Lower leg skin (tissue), 4 donors: ENCODE measurements at regions of chr1 and their contacts with region 1.

Region 1: DNA sequence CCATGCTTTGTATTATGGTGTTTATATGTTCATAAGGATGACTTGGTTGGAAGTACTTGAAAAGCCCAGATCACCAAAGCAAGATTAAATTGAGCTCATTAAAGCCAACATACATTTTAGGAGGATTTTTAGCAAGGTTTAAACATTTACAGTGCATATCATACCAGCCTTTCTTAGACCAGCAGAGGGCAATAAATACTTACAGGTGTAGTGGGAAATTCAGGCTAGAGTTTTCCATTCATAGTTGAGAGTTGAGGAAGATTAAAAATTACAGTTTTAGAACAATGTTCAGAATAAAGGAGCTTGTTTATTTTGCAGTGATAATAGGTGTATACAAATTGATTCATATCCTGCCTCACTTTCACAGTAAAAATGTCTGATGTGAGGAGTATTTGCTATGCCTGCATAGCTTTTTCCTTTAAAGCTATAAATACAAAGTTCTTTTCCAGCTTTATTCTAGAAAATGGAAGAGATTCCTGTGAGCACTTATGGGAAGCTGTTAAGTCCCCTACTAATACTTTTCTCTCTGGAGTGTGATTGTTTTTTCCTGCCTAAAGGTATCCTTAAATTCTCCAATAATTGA is 35.3 kb downstream of the DTL start:
- DNase-seq: no peak
- H3K4me3 ChIP-seq: no peak overlapping the region
- CTCF ChIP-seq: peak in 1 of 3 donors; percentile 64
- POLR2A ChIP-seq: no peak

Region 2: DNA sequence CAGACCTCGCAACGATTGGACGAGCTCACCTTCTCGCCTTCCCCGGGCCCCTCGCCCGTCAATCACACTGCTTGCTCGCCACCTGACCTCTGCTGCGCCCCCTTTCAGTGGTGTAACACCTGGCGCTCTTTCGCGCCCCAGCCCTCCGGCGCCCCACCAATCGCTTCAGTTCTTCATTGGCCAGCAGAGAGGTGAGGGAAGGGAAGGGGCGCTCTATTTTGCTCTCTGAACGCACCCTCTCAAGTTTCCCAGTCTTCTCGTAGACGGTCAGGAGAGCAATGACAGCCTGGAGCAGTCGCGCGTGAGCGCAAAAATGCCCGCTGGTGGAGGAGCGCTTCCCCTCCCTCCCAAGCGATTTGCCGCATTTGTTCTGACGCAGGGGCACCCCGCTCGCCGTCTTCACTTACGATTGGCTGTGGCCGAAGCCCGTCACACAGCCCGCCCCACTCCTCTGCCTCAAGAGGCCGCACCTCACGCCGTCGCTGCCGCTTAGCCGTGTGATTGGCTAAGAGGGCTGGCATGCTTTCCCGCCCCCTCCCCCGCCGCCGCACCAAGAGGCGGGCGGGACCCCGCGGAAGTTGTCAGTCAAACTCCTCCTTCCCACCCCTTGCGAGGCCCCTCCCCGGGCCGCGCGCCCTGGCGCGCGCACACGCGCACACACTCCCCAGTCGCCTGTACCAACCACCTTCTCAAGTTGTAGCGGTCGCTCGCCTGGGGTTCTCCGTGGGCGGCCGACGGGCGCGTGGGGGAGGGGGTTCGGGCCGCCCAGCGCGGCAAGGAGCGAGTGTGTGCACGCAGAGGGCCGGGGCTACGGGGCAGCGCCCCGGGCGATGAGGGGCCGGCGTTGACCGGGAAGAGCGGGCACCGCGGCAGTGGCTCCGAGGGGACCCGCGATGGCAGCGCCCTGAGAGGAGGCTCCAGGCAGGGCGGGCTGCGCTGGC is 214.2 kb after region 1 on chr1 and contains the start of gene PPP2R5A:
- intact Hi-C with region 1: loop called (anchors 10 kb)
- DNase-seq: peak; percentile 98 to 100
- H3K4me3 ChIP-seq: peak within 1 kb of the TSS; percentile 94
- CTCF ChIP-seq: no peak
- POLR2A ChIP-seq: peak in 1 of 2 donors; percentile 90
- total RNA-seq, gene PPP2R5A: 34.9 to 57.6 (median 53.2) TPM

Region 3: GRCh38 chr1:212368073-212368484 is 297.3 kb after region 1 on chr1:
- intact Hi-C with region 1: loop called (anchors 5 kb)
- DNase-seq: peak in 1 of 2 donors; percentile 62
- H3K4me3 ChIP-seq: no peak overlapping the region
- CTCF ChIP-seq: peak in 1 of 3 donors; percentile 66
- POLR2A ChIP-seq: no peak

Region 4: DNA sequence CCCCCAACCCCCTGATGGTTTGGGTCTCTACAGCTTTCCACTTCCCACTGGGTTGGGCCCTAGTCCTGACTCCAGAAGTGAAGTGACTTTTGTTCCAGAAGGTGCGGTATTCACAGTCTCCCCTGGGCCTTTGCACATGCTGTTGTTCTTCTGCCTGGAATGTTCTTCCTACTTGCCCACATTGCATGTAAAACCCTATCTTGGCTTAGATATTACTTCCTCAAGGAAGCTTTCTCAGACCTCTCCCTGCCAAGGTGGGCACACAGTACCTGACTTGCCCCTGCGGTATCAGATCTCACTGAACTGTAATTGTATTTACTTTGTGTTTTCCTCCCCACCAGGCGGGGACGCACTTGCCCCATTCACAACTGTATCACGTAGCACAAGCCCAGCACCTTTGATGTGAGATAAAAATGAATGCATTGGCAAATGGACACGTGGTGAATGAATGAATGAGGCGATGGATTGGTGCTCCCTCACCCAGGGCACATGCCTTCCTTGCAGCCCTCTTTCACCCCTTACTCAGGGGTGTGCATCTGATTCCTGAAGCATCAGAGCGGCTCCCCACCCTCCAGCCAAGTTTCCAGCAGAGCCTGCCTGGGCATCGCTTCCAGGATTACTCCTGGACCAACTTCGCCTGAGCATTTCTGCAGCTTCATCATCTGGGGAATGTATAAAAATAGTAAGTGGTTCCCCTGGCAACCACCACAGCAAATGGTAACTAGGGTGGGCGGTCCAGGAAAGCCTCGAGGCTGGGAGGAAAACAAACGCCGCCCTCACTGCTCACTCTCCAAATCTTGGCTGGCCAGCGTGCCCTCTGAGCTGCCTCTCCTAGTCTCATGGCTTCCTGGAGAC is 381.7 kb after region 1 on chr1:
- intact Hi-C with region 1: loop called (anchors 5 kb)
- DNase-seq: peak in 1 of 2 donors; percentile 78
- H3K4me3 ChIP-seq: no peak overlapping the region
- CTCF ChIP-seq: no peak
- POLR2A ChIP-seq: no peak